ENCODE measurements at regions of chr11 and their contacts with region 1.

Region 1: GRCh38 chr11:66694732-66695207 is 17.1 kb upstream of the RBM4B start:
- DNase-seq: peak; percentile 91
- CTCF ChIP-seq: peak; percentile 82

Region 2: DNA sequence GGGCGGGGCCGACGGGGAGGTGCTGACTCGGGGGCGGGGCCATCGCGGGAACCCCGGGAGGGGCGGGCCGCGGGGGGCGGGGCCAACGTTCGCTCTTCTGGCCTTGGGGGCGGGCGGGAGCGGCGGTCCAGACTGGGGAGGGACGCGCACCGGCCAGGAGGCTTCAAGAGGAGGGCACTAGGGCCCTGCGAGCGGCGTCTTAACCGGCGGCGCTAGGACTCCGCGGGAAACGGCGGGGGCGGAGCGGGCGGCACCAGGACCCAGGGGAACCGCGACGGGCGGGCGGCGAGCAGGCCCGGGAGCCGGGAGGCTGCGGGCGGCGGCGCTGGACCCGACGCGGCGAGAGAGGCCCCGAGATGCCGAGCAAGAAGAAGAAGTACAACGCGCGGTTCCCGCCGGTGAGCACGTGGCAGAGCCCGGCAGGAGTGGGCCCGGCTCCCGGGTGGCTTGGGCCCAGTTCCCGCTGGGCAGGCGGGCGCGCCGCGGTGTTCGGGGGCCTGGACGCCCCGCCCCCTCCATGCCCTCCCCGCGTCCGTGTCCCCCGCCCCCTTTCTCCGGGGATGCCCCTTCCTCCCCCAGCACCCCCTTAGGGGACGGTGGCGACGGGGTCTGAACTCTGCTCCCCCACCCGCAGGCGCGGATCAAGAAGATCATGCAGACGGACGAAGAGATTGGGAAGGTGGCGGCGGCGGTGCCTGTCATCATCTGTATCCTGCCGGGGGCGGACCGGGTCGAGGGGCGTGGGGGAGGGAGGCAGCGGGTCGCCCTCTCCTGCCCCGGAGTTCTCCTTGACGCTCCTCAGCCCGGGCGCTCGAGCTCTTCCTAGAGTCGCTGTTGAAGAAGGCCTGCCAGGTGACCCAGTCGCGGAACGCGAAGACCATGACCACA is 775.4 kb before region 1 on chr11 and contains the start of gene DRAP1:
- in situ Hi-C with region 1: no loop called
- DNase-seq: peak; percentile 100
- CTCF ChIP-seq: no peak

Region 3: DNA sequence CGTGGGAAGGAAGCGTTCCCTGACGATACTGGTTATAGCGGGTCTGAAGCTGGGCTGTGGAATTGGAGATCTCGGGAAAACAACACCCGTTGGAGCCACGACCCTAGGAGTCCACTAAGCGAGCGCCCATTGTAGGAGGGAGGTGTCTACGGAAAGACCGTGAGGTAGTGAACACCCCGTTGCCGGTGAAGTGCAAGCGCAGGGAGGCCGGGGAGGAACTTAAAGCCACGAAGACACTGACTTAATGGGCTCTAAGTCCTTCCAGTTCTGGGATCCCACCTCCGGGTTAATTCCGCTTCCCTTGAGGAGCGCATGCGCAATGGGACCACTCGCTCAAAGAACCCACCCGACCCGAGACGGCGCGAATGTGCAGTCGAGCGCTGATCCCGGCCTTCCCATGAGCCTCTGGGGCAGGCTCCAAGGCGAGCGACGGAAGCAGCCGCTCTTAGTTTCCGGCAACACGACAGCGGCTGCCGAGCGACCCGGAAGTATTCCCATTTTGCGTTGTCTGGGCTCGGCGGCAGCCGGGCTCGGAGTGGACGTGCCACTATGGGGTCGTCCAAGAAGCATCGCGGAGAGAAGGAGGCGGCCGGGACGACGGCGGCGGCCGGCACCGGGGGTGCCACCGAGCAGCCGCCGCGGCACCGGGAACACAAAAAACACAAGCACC is 733.4 kb before region 1 on chr11 and contains the start of gene SART1:
- in situ Hi-C with region 1: no loop called
- DNase-seq: peak; percentile 100
- CTCF ChIP-seq: no peak

Region 4: GRCh38 chr11:66834501-66834845 is 139.7 kb after region 1 on chr11:
- in situ Hi-C with region 1: loop called (anchors 5 kb)
- DNase-seq: no peak
- CTCF ChIP-seq: no peak

Region 5: GRCh38 chr11:66868726-66869566 is 174.2 kb after region 1 on chr11:
- in situ Hi-C with region 1: no loop called
- DNase-seq: peak; percentile 96
- CTCF ChIP-seq: peak; percentile 78

Measured in GM13976 (cell line).